Prostate gland (tissue), 2 donors: ENCODE measurements at regions of chr7 and their contacts with region 1.

Region 1: DNA sequence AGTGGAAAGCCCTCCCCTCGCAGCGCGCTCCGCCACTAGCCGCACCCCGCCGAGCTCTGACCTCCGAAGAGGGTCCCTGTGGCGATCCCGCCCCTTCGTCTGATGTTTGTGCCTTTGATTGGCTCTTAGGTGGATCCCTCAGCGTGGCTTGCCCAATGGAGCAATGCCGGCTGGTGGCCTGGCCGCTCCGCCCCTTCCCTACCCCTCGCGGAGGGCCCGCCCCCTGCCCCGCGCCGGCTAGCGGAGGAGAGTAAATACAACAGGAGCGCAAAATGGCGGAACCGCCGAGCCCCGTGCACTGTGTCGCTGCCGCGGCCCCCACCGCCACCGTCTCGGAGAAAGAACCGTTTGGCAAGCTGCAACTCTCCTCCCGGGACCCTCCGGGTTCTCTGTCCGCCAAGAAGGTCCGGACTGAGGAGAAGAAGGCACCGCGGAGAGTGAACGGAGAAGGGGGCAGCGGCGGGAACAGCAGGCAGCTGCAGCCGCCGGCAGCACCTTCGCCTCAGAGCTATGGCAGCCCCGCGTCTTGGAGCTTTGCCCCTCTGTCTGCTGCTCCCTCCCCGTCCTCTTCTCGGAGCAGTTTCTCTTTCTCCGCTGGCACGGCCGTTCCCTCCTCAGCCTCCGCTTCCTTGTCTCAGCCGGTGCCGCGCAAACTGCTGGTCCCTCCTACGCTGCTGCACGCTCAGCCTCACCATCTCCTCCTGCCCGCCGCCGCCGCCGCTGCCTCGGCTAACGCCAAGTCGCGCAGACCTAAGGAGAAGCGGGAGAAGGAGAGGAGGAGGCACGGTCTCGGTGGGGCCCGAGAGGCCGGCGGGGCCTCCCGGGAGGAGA is at the start of gene RSBN1L:
- DNase-seq: peak; percentile 99
- H3K4me3 ChIP-seq: peak within 1 kb of the TSS; percentile 75 to 92
- H3K27ac ChIP-seq: peak within 1 kb of the TSS; percentile 96 to 97
- H3K4me1 ChIP-seq: no peaks in the 10 kb centered on the region
- H3K27me3 ChIP-seq: no peaks in the 10 kb centered on the region
- CTCF ChIP-seq: peak in 3 of 4 experiments; percentile 12 to 60 (median 51)
- POLR2A ChIP-seq: peak; percentile 98
- total RNA-seq, gene RSBN1L: 19.4 to 20.7 TPM

Region 2: DNA sequence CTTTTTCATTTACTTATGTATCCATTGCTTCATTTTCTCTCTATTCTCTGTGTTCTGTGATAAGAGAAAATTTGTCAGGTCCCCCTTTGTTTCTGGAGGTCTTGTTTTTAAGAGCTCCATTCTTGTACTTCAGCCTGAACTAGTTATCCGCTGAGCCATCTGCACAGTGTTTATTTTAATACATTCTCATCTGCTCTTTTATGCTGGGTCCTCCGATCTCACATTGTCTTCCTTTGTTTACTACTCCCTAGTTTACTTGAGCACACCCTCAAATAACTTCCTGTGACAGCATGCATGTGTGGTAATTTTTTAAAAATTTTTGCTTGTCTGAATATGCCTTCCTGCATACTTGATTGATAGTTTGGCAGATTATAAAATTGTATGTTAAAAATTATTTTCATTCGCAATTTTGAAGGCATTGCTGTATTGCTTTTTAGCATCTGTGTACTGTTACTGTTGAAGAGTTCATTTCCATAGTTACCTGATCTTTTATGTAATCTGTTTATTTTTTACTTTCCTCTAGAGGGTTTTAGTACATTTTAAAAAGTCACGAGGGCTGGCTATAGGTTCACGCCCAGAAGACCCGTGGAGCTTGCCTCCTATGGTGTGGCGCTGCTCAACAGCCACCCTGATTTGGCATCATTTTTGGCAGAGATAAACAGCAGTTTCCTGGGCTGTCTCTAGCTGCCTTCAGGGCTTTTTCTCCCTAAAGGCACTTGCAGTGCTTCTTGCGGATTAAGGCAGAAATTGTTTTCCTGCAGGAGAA is 31.7 kb after region 1 on chr7:
- intact Hi-C with region 1: no loop called
- DNase-seq: no peak
- H3K4me3 ChIP-seq: no peak overlapping the region
- H3K27ac ChIP-seq: peak overlapping the region; percentile 17
- H3K4me1 ChIP-seq: peaks cover 5% of the 10 kb centered on the region
- H3K27me3 ChIP-seq: no peaks in the 10 kb centered on the region
- CTCF ChIP-seq: no peak
- POLR2A ChIP-seq: no peak

Region 3: DNA sequence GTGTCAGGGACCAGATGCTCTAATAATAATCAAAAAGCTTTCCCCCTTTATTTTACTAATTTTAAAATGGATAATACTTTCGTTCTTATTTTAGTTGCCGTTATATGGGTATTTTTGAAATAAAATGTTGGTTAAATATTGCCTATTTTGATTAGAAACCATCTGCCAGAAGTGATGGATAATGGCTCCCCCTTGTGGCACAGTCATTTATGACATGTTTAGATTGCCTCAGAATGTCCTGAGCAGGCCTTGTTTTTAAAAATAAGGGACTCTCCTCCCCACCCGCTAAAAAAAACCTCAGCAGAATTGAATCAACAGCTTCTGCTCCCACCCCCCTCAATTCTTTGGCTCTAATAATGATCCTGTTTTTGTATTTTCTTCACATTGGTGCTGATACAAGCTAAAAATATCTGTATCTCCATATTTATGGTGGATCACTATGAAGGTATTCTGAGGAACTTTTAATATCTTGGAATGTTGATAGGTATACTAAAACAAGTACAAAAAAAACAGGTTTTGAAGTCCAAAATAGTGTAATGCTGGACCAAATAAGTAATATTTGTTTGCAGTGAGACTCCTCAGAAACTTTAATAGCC is 63.0 kb after region 1 on chr7:
- intact Hi-C with region 1: loop called (anchors 5 kb)
- DNase-seq: peak; percentile 70
- H3K4me3 ChIP-seq: no peak overlapping the region
- H3K27ac ChIP-seq: no peak overlapping the region
- H3K4me1 ChIP-seq: no peaks in the 10 kb centered on the region
- H3K27me3 ChIP-seq: no peaks in the 10 kb centered on the region
- CTCF ChIP-seq: peak; percentile 67 to 95 (median 82)
- POLR2A ChIP-seq: no peak

Region 4: DNA sequence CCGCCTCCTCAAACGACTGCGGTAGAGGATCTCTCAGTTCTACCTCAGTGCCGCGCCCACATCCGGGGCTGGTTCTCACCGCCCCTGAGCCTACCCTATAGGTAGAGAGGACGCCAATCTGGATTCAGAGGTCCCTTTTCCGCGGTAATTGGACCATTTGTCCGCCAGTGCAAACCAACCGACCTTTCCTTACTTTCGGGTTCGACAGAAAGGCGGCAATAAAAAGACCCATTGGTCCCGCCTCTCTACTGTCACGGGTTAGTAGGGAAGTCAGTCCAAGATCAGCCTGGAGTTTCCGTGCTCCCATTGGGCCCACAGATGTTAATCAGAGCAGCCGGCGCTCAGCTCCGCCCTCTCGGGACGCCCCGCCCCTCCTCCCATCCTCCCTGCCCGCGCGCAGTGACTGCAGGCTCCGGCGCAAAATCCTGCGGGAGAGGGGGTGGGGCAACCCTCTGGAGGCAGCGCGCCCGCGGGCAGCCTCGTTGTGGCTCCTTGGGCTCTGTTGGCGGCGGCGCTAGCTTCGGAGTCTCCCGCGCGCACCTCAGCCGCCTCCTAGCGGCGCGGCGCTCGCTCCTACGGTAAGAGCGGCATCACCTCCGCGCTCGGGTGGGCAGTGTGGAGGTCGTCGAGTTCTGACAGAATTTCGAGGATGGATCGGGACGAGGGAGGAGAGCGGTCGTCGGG is 102.1 kb after region 1 on chr7 and contains the starts of genes PHTF2 and TMEM60:
- intact Hi-C with region 1: loop called (anchors 2 kb)
- DNase-seq: peak; percentile 99
- H3K4me3 ChIP-seq: peak within 1 kb of the TSS; percentile 84 to 88
- H3K27ac ChIP-seq: peak within 1 kb of the TSS; percentile 86 to 88
- H3K4me1 ChIP-seq: peaks cover 12% of the 10 kb centered on the region
- H3K27me3 ChIP-seq: no peaks in the 10 kb centered on the region
- CTCF ChIP-seq: peak in 3 of 4 experiments; percentile 60 to 67 (median 62)
- POLR2A ChIP-seq: peak; percentile 90
- total RNA-seq, gene PHTF2: 7.7 to 17.3 TPM
- total RNA-seq, gene TMEM60: 17.5 to 20.6 TPM